Activated T-helper 1 cell treated with anti-CD3 and anti-CD28 coated beads, Interleukin-12 subunit alpha, Interleukin-12 subunit beta, Interleukin-2, Interleukin-4 antibody, amounts not matched to agents 30 ng/mL and 10 ng/mL and 1 ng/mL, durations not matched to agents 14 hours and 24 hours and 36 hours (primary cell): ENCODE measurements at regions of chrX and their contacts with region 1.

Region 1: DNA sequence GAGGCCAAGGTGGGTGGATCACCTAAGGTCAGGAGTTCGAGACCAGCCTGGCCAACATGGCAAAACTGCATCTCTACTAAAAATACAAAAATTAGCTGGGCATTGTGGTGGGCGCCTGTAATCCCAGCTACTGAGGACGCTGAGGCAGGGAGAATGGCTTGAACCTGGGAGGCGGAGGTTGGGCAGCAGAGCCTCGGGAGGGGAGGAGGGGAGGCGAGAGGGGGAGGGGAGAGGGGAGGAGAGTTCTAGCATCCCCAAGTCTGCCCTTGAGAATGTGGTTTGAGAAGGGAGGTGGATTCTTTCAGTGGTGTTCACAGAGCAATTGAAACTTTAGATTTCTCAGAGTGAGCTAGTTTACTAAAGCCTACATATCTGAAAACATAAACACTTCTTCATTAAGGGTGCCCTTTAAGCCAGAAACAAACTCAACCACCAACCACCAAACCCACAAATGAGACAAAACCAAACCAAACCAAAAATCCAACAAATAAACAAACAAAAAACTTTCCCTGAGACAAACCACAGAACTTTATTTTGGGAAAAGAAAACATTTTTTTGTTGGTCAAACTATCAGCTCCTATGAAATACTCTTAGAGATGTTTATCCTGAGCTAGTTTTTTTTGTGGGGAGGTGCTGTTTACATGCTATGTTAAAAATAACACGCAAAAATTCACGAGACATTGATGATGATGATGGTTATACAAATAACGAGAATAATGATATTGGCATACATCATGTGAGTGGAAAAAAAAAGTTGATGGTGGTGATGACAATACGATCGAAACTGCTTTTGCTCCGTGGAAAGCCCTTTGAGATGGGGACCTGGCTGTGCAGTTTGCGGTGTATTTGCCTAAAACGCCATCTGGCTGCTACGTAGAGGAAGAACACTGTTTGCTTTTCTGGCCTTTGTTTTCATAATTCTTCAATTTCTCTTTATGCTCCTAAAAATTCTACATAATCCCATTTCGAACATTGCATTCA is 98.2 kb upstream of the PRKX start:
- DNase-seq: peak; percentile 31
- H3K4me3 Mint-ChIP-seq: peak overlapping the region; percentile 20
- H3K27ac Mint-ChIP-seq: peak overlapping the region; percentile 85
- H3K4me1 Mint-ChIP-seq: peaks cover 17% of the 10 kb centered on the region
- H3K27me3 Mint-ChIP-seq: peaks cover 27% of the 10 kb centered on the region

Region 2: GRCh38 chrX:3037218-3037617 is 774.4 kb before region 1 on chrX:
- intact Hi-C with region 1: loop called (anchors 1 kb)
- DNase-seq: no peak
- H3K4me3 Mint-ChIP-seq: no peak overlapping the region
- H3K27ac Mint-ChIP-seq: no peak overlapping the region
- H3K4me1 Mint-ChIP-seq: no peaks in the 10 kb centered on the region
- H3K27me3 Mint-ChIP-seq: peaks cover 3% of the 10 kb centered on the region

Region 3: GRCh38 chrX:3651276-3651675 is 160.3 kb before region 1 on chrX:
- intact Hi-C with region 1: loop called (anchors 1 kb)
- DNase-seq: no peak
- H3K4me3 Mint-ChIP-seq: no peak overlapping the region
- H3K27ac Mint-ChIP-seq: no peak overlapping the region
- H3K4me1 Mint-ChIP-seq: no peaks in the 10 kb centered on the region
- H3K27me3 Mint-ChIP-seq: no peaks in the 10 kb centered on the region

Region 4: DNA sequence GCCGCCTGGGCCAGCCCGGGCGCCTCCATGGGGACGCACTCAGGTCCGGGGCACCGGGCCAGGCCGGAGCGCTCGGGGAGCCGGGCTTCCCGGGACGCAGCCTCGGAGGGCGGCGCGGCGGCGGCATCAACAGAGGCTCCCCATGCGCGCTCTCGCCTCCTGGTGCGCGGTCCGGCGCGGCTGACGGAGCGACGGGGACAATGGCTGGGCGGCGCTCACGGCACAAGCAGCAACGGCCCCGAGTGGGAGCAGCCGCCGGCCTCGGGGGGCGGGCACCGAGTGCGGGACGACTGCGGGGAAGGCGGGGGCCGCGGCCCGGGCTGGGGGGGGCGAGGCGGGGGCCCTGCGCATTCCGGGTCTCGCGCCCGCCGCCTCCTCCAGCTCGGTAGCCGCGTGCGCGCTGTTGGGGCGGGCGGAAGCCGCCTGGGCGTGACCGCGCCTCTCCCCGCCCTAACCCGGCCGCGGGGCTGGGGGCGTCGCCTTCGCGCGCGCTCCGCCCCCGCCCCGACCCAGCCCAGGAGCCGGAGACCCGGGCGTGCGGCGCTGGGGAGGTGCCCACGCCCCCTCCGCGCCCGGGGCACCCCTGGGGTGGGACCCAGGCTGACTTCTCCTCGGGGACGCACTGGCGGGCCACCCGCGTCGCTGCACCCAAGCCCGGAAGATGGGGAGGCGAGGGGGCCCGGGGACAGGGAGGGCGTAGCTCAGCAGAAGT is 98.2 kb before region 1 on chrX and contains the start of gene PRKX:
- intact Hi-C with region 1: loop called (anchors 1 kb)
- DNase-seq: peak; percentile 71
- H3K4me3 Mint-ChIP-seq: peak within 1 kb of the TSS; percentile 100
- H3K27ac Mint-ChIP-seq: peak within 1 kb of the TSS; percentile 99
- H3K4me1 Mint-ChIP-seq: peaks cover 2% of the 10 kb centered on the region
- H3K27me3 Mint-ChIP-seq: no peaks in the 10 kb centered on the region
- total RNA-seq, gene PRKX: 72.2 and 80.9 TPM in 2 replicates

Region 5: DNA sequence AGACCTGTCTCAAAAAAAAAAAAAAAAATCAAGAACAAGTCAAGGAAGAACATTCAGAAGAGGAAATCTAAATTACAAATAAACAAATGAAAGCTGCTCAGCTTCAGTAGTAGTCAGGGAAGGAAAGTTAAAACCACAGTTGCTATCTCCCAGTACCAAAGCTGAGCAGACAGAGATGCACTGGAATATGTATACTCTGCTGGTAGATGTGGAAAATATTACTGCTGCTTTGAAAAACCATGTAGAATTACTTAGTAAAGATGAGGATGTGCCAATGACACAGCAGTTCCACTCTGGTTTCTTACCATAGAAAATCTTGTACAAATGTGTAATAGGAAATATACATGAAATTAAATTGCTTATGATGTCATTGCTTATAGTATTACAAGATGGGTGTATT is 73.1 kb before region 1 on chrX:
- intact Hi-C with region 1: loop called (anchors 1 kb)
- DNase-seq: no peak
- H3K4me3 Mint-ChIP-seq: no peak overlapping the region
- H3K27ac Mint-ChIP-seq: peak overlapping the region; percentile 95
- H3K4me1 Mint-ChIP-seq: peaks cover 25% of the 10 kb centered on the region
- H3K27me3 Mint-ChIP-seq: no peaks in the 10 kb centered on the region